ENCODE measurements at regions of chr1 and their contacts with region 1.

Region 1: DNA sequence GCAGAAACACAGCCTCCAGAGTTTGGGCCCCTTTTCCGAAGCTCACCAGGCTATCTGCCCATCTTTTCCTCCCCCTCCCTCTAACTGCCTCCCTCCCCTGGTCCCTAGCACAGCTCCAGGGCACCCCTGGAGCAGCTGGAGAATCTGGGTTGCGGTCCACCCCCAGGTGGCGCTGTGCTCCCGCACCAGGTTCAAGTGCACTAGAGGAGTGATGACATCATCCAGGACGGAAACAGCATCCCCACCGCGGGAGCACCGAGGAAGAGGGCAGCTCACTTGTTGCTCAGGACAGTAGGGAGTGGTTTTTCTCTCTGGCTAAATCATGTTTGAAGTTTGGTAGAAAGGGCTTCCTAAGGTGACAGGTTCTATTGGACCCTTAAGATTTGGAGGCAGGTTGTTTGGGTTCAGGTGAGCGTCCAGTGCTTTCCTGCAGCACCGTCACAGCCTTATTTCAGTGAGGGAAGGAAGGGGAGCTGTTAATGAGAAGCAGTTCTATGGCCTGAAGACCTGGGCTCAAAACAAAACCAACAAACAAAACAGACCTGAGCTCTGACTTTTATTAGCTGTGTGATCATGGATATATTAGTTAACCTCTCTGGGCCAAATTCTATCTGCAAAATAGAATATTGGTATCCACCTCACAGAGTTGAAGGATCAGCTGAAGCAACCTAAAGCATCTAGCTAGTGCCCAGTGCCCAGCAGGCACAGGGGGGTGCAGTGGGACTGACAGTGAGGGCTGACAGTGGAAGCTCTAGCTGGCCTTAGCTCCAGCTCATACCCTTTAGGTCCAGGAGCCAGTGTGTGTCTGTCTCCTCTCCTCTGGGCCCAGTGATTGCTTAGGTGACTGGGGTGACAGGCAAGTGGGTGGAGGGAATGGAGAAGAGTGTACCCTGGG is 7.5 kb downstream of the SHISA4 start:
- DNase-seq: no peak
- ATAC-seq: peak; percentile 94
- H3K4me3 ChIP-seq: peak overlapping the region in 1 of 2 experiments; percentile 43; a peak in 2 of 4 replicates
- H3K27ac ChIP-seq: no peak overlapping the region
- H3K4me1 ChIP-seq: 0 out of 2 replicates have a peak, but pooled peaks cover 3% of the 10 kb centered on the region
- H3K27me3 ChIP-seq: no peaks in the 10 kb centered on the region
- CTCF ChIP-seq: peak; percentile 96

Region 2: DNA sequence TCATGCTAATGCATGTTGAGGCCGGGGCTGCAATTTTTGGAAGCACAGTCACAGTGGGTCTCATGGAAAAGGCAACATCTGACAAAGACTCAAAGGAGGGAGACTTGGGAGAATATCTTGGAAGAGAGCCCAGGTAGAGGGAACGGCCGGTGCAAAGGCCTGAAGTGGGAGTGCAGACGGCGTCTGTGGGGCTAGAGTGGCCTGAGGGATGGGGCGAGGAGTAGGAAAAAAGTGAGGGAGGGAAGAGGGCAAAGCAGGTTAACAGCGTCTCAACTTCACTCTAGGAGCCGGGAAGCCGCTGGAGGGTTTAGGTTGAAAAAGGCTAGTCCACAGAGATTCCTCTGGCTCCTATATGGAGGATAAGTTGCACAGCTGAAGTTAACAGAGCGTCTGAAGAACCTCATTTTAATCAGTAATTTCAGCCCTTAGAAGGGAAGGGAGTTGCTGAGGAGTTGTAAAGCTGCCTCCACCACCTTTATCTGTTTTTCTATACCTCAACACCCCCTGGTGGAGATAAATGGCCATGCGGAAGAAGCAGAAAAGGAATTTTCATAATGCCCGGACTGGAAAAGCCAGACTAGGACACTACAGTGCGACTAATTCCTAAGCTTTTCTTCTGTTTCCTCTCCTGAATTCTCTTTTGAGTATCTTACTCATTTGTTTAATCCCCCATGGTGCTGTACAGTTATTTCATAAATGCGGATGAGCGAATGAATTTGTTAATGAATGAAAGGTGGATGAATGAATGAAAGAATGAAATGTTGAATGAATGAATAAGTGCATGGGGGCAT is 1407.6 kb before region 1 on chr1:
- CTCF ChIA-PET with region 1: no interaction called
- POLR2A ChIA-PET with region 1: no interaction called
- in situ Hi-C with region 1: no loop called
- intact Hi-C with region 1: no loop called
- DNase-seq: peak; percentile 75
- ATAC-seq: peak; percentile 92
- H3K4me3 ChIP-seq: peak overlapping the region in 1 of 2 experiments; percentile 38; a peak in 2 of 4 replicates
- H3K27ac ChIP-seq: peak overlapping the region; percentile 69
- H3K4me1 ChIP-seq: peaks cover 16% of the 10 kb centered on the region
- H3K27me3 ChIP-seq: no peaks in the 10 kb centered on the region
- CTCF ChIP-seq: peak; percentile 84

Region 3: DNA sequence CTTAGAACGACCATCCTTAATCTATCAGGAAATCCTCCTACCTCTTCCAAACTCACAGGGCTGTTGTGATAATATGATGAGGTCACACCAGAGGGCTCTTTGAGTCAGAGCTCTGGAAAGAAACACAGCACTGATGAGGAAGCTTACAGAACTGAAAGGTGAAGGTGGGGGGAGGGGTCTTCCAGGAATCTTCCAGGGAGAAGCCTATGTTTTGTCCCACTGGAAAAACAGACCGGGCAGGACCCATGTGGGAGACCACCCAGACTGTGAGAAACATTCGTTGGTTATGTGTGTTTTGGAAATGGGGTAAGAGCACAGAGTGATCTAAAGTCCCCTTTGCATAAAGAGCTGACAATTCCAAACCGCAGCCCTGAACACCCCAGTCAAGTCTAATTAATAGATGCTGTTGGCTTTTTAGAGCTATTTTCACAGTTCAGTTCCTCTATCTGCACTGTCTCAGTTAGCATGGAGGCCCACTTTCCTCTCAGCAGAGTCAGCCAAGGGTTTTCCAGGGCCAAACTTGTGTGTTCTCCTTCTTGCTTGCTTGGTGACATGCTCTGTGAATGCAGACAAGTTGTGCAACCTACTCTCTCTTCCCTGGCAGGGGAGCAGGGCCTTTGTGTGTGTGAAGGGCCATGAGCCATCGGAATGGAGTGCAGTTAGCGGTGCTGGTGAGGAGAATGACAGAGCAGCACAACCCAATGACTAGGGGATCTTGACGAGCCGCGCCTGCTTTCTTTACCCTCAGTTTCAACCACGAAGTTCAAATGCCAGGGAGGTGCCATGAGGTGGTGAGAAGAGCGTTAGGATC is 439.5 kb before region 1 on chr1:
- CTCF ChIA-PET with region 1: interaction called, 10 read pairs
- POLR2A ChIA-PET with region 1: no interaction called
- in situ Hi-C with region 1: no loop called
- intact Hi-C with region 1: no loop called
- DNase-seq: peak; percentile 61
- ATAC-seq: peak; percentile 66
- H3K4me3 ChIP-seq: 0 out of 4 replicates have a peak overlapping the region, but pooled peaks of 1 of the 2 experiments have one; percentile 2
- H3K27ac ChIP-seq: peak overlapping the region; percentile 67
- H3K4me1 ChIP-seq: peaks cover 34% of the 10 kb centered on the region
- H3K27me3 ChIP-seq: no peaks in the 10 kb centered on the region
- CTCF ChIP-seq: no peak

Region 4: DNA sequence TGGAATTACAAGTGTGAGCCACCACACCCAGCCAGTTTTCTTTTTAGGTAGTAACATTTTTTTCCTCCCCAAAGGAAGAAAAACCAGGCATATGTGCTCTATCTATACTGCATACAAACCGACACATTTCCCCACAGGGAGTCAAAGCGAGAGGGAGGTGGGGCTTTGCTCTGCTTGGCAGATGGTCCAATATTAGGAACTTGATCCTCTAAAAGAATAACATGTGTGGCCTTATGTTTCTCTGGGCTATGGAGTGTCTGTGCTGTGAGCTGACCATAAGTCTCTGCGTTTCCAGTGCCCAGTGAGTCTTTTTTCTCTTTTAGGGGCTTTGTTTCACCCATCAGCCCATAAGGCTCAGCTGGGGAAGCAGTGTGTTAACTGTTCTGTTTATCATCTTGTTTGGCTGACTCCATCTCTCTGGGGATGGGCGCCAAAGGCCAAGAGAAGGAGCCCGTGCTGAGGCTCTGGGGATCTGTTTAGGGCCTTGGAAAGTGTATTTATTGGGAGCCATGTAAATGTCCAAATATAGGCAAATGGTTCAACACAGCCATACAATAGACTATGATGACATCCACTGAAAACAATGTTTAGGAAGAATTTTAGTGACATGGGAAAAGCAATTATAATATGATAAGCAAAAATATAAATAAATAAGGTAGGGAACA is 30.0 kb after region 1 on chr1:
- CTCF ChIA-PET with region 1: interaction called, 11 read pairs
- POLR2A ChIA-PET with region 1: no interaction called
- in situ Hi-C with region 1: no loop called
- intact Hi-C with region 1: no loop called
- DNase-seq: no peak
- ATAC-seq: no peak
- H3K4me3 ChIP-seq: no peak overlapping the region
- H3K27ac ChIP-seq: no peak overlapping the region
- H3K4me1 ChIP-seq: no peaks in the 10 kb centered on the region
- H3K27me3 ChIP-seq: peaks cover 3% of the 10 kb centered on the region; the same call in 1 of the 2 replicates
- CTCF ChIP-seq: no peak

Region 5: GRCh38 chr1:201970334-201971159 is 74.4 kb after region 1 on chr1:
- CTCF ChIA-PET with region 1: interaction called, 38 read pairs
- POLR2A ChIA-PET with region 1: no interaction called
- in situ Hi-C with region 1: no loop called
- intact Hi-C with region 1: loop called (anchors 1 kb)
- DNase-seq: no peak
- ATAC-seq: 0 out of 2 replicates have a peak, but pooled peaks have one; percentile 34
- H3K4me3 ChIP-seq: no peak overlapping the region
- H3K27ac ChIP-seq: no peak overlapping the region
- H3K4me1 ChIP-seq: no peaks in the 10 kb centered on the region
- H3K27me3 ChIP-seq: no peaks in the 10 kb centered on the region
- CTCF ChIP-seq: no peak

Region 6: GRCh38 chr1:201999625-202000238 is 103.6 kb after region 1 on chr1:
- CTCF ChIA-PET with region 1: no interaction called
- POLR2A ChIA-PET with region 1: no interaction called
- in situ Hi-C with region 1: no loop called
- intact Hi-C with region 1: no loop called
- DNase-seq: no peak
- ATAC-seq: peak; percentile 85
- H3K4me3 ChIP-seq: no peak overlapping the region
- H3K27ac ChIP-seq: no peak overlapping the region
- H3K4me1 ChIP-seq: no peaks in the 10 kb centered on the region
- H3K27me3 ChIP-seq: no peaks in the 10 kb centered on the region
- CTCF ChIP-seq: peak; percentile 87

Region 7: DNA sequence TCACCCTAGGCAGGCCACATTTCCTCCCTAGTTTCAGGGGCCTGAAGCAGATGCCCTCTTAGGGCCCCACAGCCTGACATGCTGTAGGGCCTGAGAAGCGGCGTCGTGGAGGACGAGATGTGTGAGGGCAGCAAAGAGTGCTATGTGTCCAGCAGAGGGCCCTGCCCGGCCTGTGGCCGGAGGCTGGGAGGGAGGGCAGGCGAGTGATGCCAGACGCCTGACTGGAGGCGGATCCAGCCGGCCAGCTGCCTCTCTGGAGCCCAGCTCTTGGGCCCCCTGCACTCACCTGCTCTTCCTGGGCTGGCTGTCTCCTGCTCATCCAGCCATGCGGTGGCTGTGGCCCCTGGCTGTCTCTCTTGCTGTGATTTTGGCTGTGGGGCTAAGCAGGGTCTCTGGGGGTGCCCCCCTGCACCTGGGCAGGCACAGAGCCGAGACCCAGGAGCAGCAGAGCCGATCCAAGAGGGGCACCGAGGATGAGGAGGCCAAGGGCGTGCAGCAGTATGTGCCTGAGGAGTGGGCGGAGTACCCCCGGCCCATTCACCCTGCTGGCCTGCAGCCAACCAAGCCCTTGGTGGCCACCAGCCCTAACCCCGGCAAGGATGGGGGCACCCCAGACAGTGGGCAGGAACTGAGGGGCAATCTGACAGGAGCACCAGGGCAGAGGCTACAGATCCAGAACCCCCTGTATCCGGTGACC is 226.6 kb after region 1 on chr1 and contains the start of gene GPR37L1:
- CTCF ChIA-PET with region 1: no interaction called
- POLR2A ChIA-PET with region 1: no interaction called
- in situ Hi-C with region 1: no loop called
- intact Hi-C with region 1: loop called (anchors 5 kb)
- DNase-seq: no peak
- ATAC-seq: peak; percentile 81
- H3K4me3 ChIP-seq: no peak within 1 kb of the TSS
- H3K27ac ChIP-seq: no peak within 1 kb of the TSS
- H3K4me1 ChIP-seq: peaks cover 12% of the 10 kb centered on the region
- H3K27me3 ChIP-seq: no peaks in the 10 kb centered on the region
- CTCF ChIP-seq: peak; percentile 83; the same call in 1 of the 2 replicates
- total RNA-seq, gene GPR37L1: 0.44 TPM

Measured in Panc1 (cell line).